Endothelial cell of umbilical vein (primary cell): ENCODE measurements at regions of chr11 and their contacts with region 1.

Region 1: DNA sequence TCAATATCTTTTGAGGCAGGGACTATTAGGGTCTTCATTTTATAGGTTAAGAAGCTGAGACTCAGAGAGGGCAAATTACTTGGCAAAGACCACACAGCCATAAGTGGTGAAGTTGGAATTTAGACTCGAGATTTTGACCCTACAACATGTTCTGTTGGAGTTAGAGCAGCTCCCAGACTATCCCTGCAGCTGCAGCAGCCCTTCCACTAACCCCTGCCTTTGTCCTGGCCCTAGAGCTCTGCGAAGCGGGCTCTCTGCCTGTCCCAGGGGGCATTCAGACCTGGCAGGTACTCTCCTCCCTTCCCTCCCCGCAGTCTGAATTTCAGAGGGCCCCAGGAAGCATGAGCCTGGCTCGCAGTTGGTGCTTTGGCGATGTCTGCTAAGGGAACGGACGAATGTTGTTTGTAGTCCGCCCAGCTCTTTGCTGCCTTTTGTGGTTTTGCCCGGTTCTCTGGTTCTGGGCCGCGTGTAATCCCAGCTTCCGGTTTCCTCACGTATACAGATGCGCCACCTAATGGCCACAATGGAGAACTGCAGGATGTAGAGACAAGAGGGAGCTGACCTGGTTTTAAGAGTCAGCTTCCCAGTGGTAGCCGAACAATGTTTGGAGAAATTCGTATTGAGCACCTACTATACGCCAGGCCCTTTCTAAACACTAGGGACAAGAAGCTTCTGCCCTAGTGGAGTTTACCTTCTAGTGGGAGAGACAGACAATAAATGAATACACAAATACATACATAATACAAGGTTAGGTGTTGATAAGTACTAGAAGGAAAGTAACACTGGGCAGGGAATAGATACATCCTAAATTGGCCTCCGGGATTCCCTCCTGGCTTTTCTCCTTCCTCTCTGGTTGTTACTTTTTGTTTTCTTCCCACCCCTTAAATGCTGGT is 125.2 kb downstream of the ST3GAL4 start:
- DNase-seq: peak; percentile 76
- H3K4me3 ChIP-seq: no peak overlapping the region
- H3K27ac ChIP-seq: no peak overlapping the region
- H3K4me1 ChIP-seq: no peaks in the 10 kb centered on the region
- H3K27me3 ChIP-seq: peaks cover 0 to 2% of the 10 kb centered on the region in 2 experiments
- CTCF ChIP-seq: peak; percentile 87 to 95
- POLR2A ChIP-seq: no peak

Region 2: GRCh38 chr11:126194121-126194543 is 286.5 kb before region 1 on chr11:
- CTCF ChIA-PET with region 1: no interaction called
- POLR2A ChIA-PET with region 1: no interaction called
- dilution Hi-C with region 1: no loop called
- intact Hi-C with region 1: no loop called
- DNase-seq: peak; percentile 67
- H3K4me3 ChIP-seq: no peak overlapping the region
- H3K27ac ChIP-seq: no peak overlapping the region
- H3K4me1 ChIP-seq: no peaks in the 10 kb centered on the region
- H3K27me3 ChIP-seq: no peaks in the 10 kb centered on the region
- CTCF ChIP-seq: peak; percentile 35 to 49
- POLR2A ChIP-seq: no peak

Region 3: GRCh38 chr11:126257764-126258163 is 222.9 kb before region 1 on chr11:
- CTCF ChIA-PET with region 1: no interaction called
- POLR2A ChIA-PET with region 1: no interaction called
- dilution Hi-C with region 1: no loop called
- intact Hi-C with region 1: no loop called
- DNase-seq: no peak
- H3K4me3 ChIP-seq: no peak overlapping the region
- H3K27ac ChIP-seq: no peak overlapping the region
- H3K4me1 ChIP-seq: no peaks in the 10 kb centered on the region
- H3K27me3 ChIP-seq: no peaks in the 10 kb centered on the region
- CTCF ChIP-seq: no peak
- POLR2A ChIP-seq: no peak

Region 4: DNA sequence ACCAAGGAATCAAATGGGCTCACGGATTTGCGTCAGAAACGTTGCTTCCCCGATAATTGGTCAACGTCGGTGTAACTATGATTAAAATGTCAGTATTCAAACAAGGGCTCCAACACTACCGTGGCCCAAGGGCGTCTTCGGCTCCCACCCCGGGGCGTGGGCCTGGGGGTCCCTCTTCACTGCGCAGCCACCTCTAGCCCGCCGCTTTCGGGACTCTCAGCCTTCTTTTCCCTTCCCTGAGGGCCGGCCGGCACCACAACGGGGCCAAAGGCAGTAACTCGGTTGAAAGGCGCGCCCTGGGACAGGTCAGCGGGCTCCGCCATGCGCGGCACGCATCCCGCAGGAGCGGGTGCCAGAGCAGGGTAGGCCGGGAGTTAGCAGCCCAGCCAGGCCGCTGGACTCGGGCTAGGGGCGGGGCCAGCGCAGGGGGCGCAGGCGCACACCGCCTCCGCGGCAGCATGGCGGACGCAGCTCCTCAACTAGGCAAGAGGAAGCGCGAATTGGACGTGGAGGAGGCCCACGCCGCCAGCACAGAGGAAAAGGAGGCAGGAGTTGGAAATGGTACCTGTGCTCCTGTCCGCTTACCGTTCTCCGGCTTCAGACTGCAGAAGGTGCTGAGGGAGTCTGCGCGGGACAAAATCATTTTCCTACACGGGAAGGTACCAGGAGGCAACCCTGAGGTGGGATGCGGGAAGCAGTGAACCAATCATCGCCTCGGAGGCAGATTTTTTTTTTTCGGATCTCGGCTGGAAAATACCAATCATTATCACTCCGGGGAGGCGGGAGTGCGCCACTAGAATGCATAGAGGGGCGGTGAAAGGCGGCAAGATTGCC is 176.8 kb before region 1 on chr11 and contains the start of gene DCPS:
- CTCF ChIA-PET with region 1: interaction called, 437 read pairs
- POLR2A ChIA-PET with region 1: no interaction called
- dilution Hi-C with region 1: no loop called
- intact Hi-C with region 1: no loop called
- DNase-seq: peak; percentile 96
- H3K4me3 ChIP-seq: peak within 1 kb of the TSS; percentile 28 to 74 (median 35)
- H3K27ac ChIP-seq: peak within 1 kb of the TSS; percentile 55
- H3K4me1 ChIP-seq: no peaks in the 10 kb centered on the region
- H3K27me3 ChIP-seq: no peaks in the 10 kb centered on the region
- CTCF ChIP-seq: no peak
- POLR2A ChIP-seq: peak; percentile 92
- total RNA-seq, gene DCPS: 19.6 and 21.8 TPM in 2 replicates

Region 5: GRCh38 chr11:126334659-126335462 is 145.8 kb before region 1 on chr11:
- CTCF ChIA-PET with region 1: interaction called, 14 read pairs
- POLR2A ChIA-PET with region 1: no interaction called
- dilution Hi-C with region 1: no loop called
- intact Hi-C with region 1: no loop called
- DNase-seq: no peak
- H3K4me3 ChIP-seq: no peak overlapping the region
- H3K27ac ChIP-seq: peak overlapping the region; percentile 95
- H3K4me1 ChIP-seq: peaks cover 32% of the 10 kb centered on the region
- H3K27me3 ChIP-seq: no peaks in the 10 kb centered on the region
- CTCF ChIP-seq: no peak
- POLR2A ChIP-seq: no peak

Region 6: GRCh38 chr11:126431401-126432064 is 49.1 kb before region 1 on chr11:
- CTCF ChIA-PET with region 1: interaction called, 26 read pairs
- POLR2A ChIA-PET with region 1: no interaction called
- dilution Hi-C with region 1: no loop called
- intact Hi-C with region 1: no loop called
- DNase-seq: peak; percentile 62
- H3K4me3 ChIP-seq: no peak overlapping the region
- H3K27ac ChIP-seq: peak overlapping the region; percentile 58
- H3K4me1 ChIP-seq: peaks cover 11% of the 10 kb centered on the region
- H3K27me3 ChIP-seq: no peaks in the 10 kb centered on the region
- CTCF ChIP-seq: no peak
- POLR2A ChIP-seq: no peak

Region 7: GRCh38 chr11:126465573-126466188 is 15.0 kb before region 1 on chr11:
- CTCF ChIA-PET with region 1: interaction called, 78 read pairs
- POLR2A ChIA-PET with region 1: no interaction called
- dilution Hi-C with region 1: no loop called
- intact Hi-C with region 1: no loop called
- DNase-seq: no peak
- H3K4me3 ChIP-seq: no peak overlapping the region
- H3K27ac ChIP-seq: no peak overlapping the region
- H3K4me1 ChIP-seq: no peaks in the 10 kb centered on the region
- H3K27me3 ChIP-seq: no peaks in the 10 kb centered on the region
- CTCF ChIP-seq: no peak
- POLR2A ChIP-seq: no peak

Region 8: DNA sequence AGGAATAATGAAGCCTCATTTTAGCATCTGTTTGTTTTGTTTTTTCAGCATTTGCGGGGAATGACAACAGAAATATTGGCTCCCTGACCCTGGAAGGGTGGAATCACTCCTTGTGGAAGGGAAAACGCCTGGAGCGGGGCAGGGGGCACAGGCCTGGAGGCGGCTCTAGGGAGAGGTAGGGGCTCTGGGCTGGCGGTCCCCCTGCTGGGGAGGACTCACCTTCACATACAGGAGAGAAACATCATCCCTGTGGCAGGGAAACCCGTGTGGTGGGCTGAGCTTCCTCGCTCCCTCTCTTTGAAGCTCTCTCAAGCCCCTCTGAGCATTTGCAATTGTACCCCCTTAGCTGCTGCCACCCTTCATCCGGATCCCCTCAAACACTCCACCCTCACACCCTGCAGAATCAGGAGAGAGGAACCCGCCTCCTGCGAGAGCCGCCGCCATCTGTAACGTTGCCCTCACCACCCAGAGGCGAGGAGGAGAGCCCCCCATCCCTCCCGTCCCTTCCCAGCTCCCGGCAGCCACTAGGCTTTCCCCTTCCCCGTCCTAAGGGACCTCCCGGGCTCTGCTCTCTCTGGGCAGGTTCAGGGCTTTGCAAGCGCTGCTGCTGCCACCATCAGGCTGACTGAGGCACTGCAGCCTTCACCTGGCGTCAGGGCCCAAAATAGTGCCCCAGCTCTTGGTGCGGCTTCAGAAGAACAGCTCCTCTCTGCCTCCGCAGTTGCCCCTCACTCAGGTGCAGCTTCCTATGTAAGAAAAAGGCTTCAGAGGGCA is 509.5 kb after region 1 on chr11:
- CTCF ChIA-PET with region 1: interaction called, 40 read pairs
- POLR2A ChIA-PET with region 1: no interaction called
- dilution Hi-C with region 1: no loop called
- intact Hi-C with region 1: loop called (anchors 1 kb)
- DNase-seq: peak; percentile 35
- H3K4me3 ChIP-seq: no peak overlapping the region
- H3K27ac ChIP-seq: no peak overlapping the region
- H3K4me1 ChIP-seq: no peaks in the 10 kb centered on the region
- H3K27me3 ChIP-seq: no peaks in the 10 kb centered on the region
- CTCF ChIP-seq: peak; percentile 76 to 96
- POLR2A ChIP-seq: no peak